ENCODE measurements at regions of chr22 and their contacts with region 1.

Region 1: GRCh38 chr22:28129319-28129962 is 210.4 kb upstream of the PITPNB start:
- DNase-seq: no peak
- ATAC-seq: no peak
- H3K4me3 ChIP-seq: no peak overlapping the region
- H3K27ac ChIP-seq: no peak overlapping the region
- H3K4me1 ChIP-seq: no peaks in the 10 kb centered on the region
- H3K27me3 ChIP-seq: no peaks in the 10 kb centered on the region

Region 2: GRCh38 chr22:27086080-27087044 is 1043.1 kb before region 1 on chr22:
- intact Hi-C with region 1: no loop called
- DNase-seq: no peak
- ATAC-seq: no peak
- H3K4me3 ChIP-seq: no peak overlapping the region
- H3K27ac ChIP-seq: no peak overlapping the region
- H3K4me1 ChIP-seq: no peaks in the 10 kb centered on the region
- H3K27me3 ChIP-seq: no peaks in the 10 kb centered on the region

Region 3: GRCh38 chr22:28075358-28075981 is 54.0 kb before region 1 on chr22:
- intact Hi-C with region 1: no loop called
- DNase-seq: peak in 2 of 3 donors; percentile 52 to 57
- ATAC-seq: peak; percentile 93 to 96
- H3K4me3 ChIP-seq: no peak overlapping the region
- H3K27ac ChIP-seq: peak overlapping the region; percentile 84
- H3K4me1 ChIP-seq: peaks cover 5% of the 10 kb centered on the region
- H3K27me3 ChIP-seq: no peaks in the 10 kb centered on the region

Region 4: GRCh38 chr22:28151151-28151816 is 21.8 kb after region 1 on chr22:
- intact Hi-C with region 1: loop called in 1 of 4 experiments (anchors 2 kb)
- DNase-seq: no peak
- ATAC-seq: no peak
- H3K4me3 ChIP-seq: no peak overlapping the region
- H3K27ac ChIP-seq: no peak overlapping the region
- H3K4me1 ChIP-seq: no peaks in the 10 kb centered on the region
- H3K27me3 ChIP-seq: no peaks in the 10 kb centered on the region

Region 5: DNA sequence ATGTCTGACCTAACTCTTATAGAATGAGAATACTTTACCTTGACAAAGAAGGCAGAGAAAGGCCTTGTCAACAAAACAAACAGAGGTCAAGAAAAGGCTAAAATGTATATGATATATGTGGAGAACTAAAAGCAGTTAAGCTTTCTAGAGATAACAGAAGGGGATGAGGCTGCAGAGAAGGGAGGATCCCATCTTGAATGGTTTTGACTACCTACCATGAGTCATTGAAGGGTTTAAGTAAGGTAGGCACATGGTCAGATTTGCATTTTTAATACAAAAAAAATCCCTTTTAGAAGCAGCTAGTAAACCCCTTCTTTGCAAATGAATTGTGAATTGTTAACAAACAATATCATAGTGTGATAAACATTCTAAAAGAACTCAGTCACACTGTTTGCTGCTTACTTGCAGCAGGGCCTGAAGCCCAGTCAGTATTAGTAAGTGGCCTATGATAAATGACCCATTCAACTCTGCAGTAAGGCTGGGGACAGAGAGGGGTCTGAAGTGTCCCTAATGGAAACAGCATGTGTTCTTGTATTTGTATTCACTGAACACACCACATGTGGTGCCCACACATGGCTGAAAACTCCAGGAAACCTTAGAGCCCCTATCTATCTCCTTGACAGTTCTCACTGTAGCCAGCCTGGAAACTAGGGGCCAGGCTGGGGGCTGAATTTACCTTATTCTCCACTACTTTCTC is 118.4 kb after region 1 on chr22:
- intact Hi-C with region 1: no loop called
- DNase-seq: no peak
- ATAC-seq: no peak
- H3K4me3 ChIP-seq: no peak overlapping the region
- H3K27ac ChIP-seq: no peak overlapping the region
- H3K4me1 ChIP-seq: peaks cover 4% of the 10 kb centered on the region
- H3K27me3 ChIP-seq: no peaks in the 10 kb centered on the region

Region 6: GRCh38 chr22:28410050-28410816 is 280.8 kb after region 1 on chr22:
- intact Hi-C with region 1: no loop called
- DNase-seq: no peak
- ATAC-seq: no peak
- H3K4me3 ChIP-seq: no peak overlapping the region
- H3K27ac ChIP-seq: no peak overlapping the region
- H3K4me1 ChIP-seq: peaks cover 7% of the 10 kb centered on the region
- H3K27me3 ChIP-seq: no peaks in the 10 kb centered on the region

Measured in right cardiac atrium (tissue), 5 donors.